IMR-90 (cell line): ENCODE measurements at regions of chr6 and their contacts with region 1.

Region 1: GRCh38 chr6:70884074-70884983 is 72.5 kb downstream of the B3GAT2 start:
- DNase-seq: peak; percentile 33
- ATAC-seq: peak; percentile 97
- H3K4me3 ChIP-seq: no peak overlapping the region
- H3K27ac ChIP-seq: no peak overlapping the region
- H3K4me1 ChIP-seq: no peaks in the 10 kb centered on the region
- H3K27me3 ChIP-seq: peaks cover 12% of the 10 kb centered on the region
- CTCF ChIP-seq: peak; percentile 88
- POLR2A ChIP-seq: 0 out of 2 replicates have a peak, but pooled peaks have one; percentile 22
- RAD21 ChIP-seq: peak; percentile 91

Region 2: GRCh38 chr6:70310063-70310694 is 574.1 kb before region 1 on chr6:
- CTCF ChIA-PET with region 1: interaction called, 7 read pairs
- POLR2A ChIA-PET with region 1: no interaction called
- dilution Hi-C with region 1: no loop called
- in situ Hi-C with region 1: no loop called
- intact Hi-C with region 1: loop called (anchors 5 kb)
- DNase-seq: peak; percentile 53
- ATAC-seq: no peak; the same call in 1 of the 2 replicates
- H3K4me3 ChIP-seq: no peak overlapping the region
- H3K27ac ChIP-seq: no peak overlapping the region
- H3K4me1 ChIP-seq: no peaks in the 10 kb centered on the region
- H3K27me3 ChIP-seq: peaks cover 33% of the 10 kb centered on the region
- CTCF ChIP-seq: peak; percentile 73
- POLR2A ChIP-seq: no peak
- RAD21 ChIP-seq: peak; percentile 56

Region 3: DNA sequence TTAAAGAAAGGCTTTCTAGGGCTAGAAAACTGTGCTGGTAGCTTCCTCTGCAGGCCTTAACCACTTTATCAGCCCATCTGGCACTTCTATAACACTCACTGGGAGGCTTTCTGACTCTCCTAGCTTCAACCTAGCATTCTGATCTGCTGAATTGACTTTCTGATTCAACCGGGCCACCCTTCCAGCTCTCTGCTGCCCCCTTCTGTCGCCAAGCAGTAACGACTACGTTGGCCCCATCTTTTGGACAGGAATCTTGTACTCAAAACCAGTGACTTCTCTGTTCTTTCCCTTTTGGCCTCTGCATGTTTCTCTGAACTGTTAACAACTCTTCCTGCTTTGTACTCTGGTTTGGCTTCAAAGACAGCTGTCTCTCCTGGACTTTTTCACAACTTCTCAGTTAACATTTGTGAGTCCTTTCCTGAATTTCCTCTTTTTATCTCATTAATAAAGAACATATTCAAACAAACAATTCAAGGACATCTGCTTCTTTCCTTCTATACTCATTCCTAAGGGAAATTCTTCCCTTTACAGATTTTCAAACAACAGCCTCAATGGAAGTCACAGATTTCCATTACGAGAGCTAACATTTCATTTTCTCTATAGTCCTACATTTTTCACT is 514.9 kb before region 1 on chr6:
- CTCF ChIA-PET with region 1: no interaction called
- POLR2A ChIA-PET with region 1: no interaction called
- dilution Hi-C with region 1: no loop called
- in situ Hi-C with region 1: no loop called
- intact Hi-C with region 1: loop called (anchors 10 kb)
- DNase-seq: peak; percentile 68
- ATAC-seq: peak; percentile 98
- H3K4me3 ChIP-seq: no peak overlapping the region
- H3K27ac ChIP-seq: no peak overlapping the region
- H3K4me1 ChIP-seq: no peaks in the 10 kb centered on the region
- H3K27me3 ChIP-seq: peaks cover 25% of the 10 kb centered on the region
- CTCF ChIP-seq: peak; percentile 91
- POLR2A ChIP-seq: no peak
- RAD21 ChIP-seq: peak; percentile 62

Region 4: DNA sequence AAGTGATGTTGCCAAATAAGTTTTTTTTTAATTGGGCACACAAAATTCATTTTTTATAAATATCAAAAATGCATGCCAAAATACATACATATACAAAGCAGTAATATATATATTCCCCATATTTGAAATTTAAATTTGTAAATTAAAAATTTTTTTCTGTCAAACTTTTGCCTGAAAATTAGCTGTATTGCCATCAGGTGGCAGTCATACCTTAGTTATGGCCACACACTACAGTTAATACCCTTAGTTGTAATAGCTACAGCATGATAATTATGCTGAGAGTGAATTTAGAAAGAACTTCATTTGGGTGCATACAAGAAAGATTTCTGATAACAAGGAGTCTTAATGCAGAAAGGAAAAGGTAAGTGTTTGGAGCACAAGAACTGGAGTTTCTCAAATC is 363.8 kb before region 1 on chr6:
- CTCF ChIA-PET with region 1: no interaction called
- POLR2A ChIA-PET with region 1: no interaction called
- dilution Hi-C with region 1: no loop called
- in situ Hi-C with region 1: no loop called
- intact Hi-C with region 1: loop called (anchors 1 kb)
- DNase-seq: peak; percentile 18
- ATAC-seq: no peak
- H3K4me3 ChIP-seq: no peak overlapping the region
- H3K27ac ChIP-seq: no peak overlapping the region
- H3K4me1 ChIP-seq: no peaks in the 10 kb centered on the region
- H3K27me3 ChIP-seq: no peaks in the 10 kb centered on the region
- CTCF ChIP-seq: peak; percentile 49
- POLR2A ChIP-seq: no peak
- RAD21 ChIP-seq: peak; percentile 64

Region 5: GRCh38 chr6:70537266-70537665 is 347.1 kb before region 1 on chr6:
- CTCF ChIA-PET with region 1: no interaction called
- POLR2A ChIA-PET with region 1: no interaction called
- dilution Hi-C with region 1: no loop called
- in situ Hi-C with region 1: no loop called
- intact Hi-C with region 1: no loop called
- DNase-seq: no peak
- ATAC-seq: no peak
- H3K4me3 ChIP-seq: no peak overlapping the region
- H3K27ac ChIP-seq: no peak overlapping the region
- H3K4me1 ChIP-seq: no peaks in the 10 kb centered on the region
- H3K27me3 ChIP-seq: no peaks in the 10 kb centered on the region
- CTCF ChIP-seq: no peak
- POLR2A ChIP-seq: no peak
- RAD21 ChIP-seq: no peak

Region 6: GRCh38 chr6:70547313-70547712 is 337.0 kb before region 1 on chr6:
- CTCF ChIA-PET with region 1: interaction called, 3 read pairs
- POLR2A ChIA-PET with region 1: no interaction called
- dilution Hi-C with region 1: no loop called
- in situ Hi-C with region 1: no loop called
- intact Hi-C with region 1: loop called (anchors 1 kb)
- DNase-seq: peak; percentile 37
- ATAC-seq: peak; percentile 57
- H3K4me3 ChIP-seq: no peak overlapping the region
- H3K27ac ChIP-seq: no peak overlapping the region
- H3K4me1 ChIP-seq: no peaks in the 10 kb centered on the region
- H3K27me3 ChIP-seq: no peaks in the 10 kb centered on the region
- CTCF ChIP-seq: peak; percentile 41
- POLR2A ChIP-seq: no peak
- RAD21 ChIP-seq: peak; percentile 50

Region 7: DNA sequence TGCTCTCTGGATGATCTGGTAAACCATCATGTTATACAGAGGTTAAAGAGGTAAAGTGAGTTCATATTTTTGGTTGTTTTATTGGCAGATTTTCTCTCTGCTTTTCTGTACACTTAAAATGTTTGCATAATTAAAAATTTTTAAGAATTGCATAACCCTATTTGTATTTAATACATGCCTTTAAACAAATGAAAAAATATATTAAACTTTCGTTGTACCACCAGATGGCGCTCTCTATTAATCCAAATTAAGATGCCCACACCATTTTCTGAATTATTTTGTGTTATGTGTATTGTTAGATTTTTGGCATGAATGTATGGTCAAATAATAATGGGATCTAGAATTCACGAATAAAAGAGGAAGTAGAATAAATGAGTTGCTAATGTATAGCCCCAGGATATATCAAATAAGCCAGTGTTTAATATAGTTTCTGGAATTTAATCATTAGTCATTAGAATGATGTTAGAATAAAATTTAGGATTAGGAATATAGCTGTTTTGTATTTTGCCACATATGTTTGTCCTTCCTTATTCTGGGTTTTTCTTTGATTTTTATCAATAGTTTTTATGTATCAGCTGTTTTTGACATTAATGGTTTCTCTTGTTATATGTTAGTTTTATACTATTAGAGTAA is 177.7 kb before region 1 on chr6:
- CTCF ChIA-PET with region 1: interaction called, 39 read pairs
- POLR2A ChIA-PET with region 1: no interaction called
- dilution Hi-C with region 1: loop called (anchors 25 kb)
- in situ Hi-C with region 1: loop called (anchors 5 kb)
- intact Hi-C with region 1: loop called (anchors 1 kb)
- DNase-seq: peak; percentile 58
- ATAC-seq: peak; percentile 27; the same call in 1 of the 2 replicates
- H3K4me3 ChIP-seq: no peak overlapping the region
- H3K27ac ChIP-seq: no peak overlapping the region
- H3K4me1 ChIP-seq: no peaks in the 10 kb centered on the region
- H3K27me3 ChIP-seq: no peaks in the 10 kb centered on the region
- CTCF ChIP-seq: peak; percentile 71
- POLR2A ChIP-seq: no peak
- RAD21 ChIP-seq: peak; percentile 68

Region 8: GRCh38 chr6:70980725-70981124 is 96.4 kb after region 1 on chr6:
- CTCF ChIA-PET with region 1: no interaction called
- POLR2A ChIA-PET with region 1: no interaction called
- dilution Hi-C with region 1: no loop called
- in situ Hi-C with region 1: no loop called
- intact Hi-C with region 1: no loop called
- DNase-seq: no peak
- ATAC-seq: no peak
- H3K4me3 ChIP-seq: no peak overlapping the region
- H3K27ac ChIP-seq: no peak overlapping the region
- H3K4me1 ChIP-seq: no peaks in the 10 kb centered on the region
- H3K27me3 ChIP-seq: no peaks in the 10 kb centered on the region
- CTCF ChIP-seq: no peak
- POLR2A ChIP-seq: no peak
- RAD21 ChIP-seq: no peak